ENCODE measurements at regions of chr1 and their contacts with region 1.

Region 1: DNA sequence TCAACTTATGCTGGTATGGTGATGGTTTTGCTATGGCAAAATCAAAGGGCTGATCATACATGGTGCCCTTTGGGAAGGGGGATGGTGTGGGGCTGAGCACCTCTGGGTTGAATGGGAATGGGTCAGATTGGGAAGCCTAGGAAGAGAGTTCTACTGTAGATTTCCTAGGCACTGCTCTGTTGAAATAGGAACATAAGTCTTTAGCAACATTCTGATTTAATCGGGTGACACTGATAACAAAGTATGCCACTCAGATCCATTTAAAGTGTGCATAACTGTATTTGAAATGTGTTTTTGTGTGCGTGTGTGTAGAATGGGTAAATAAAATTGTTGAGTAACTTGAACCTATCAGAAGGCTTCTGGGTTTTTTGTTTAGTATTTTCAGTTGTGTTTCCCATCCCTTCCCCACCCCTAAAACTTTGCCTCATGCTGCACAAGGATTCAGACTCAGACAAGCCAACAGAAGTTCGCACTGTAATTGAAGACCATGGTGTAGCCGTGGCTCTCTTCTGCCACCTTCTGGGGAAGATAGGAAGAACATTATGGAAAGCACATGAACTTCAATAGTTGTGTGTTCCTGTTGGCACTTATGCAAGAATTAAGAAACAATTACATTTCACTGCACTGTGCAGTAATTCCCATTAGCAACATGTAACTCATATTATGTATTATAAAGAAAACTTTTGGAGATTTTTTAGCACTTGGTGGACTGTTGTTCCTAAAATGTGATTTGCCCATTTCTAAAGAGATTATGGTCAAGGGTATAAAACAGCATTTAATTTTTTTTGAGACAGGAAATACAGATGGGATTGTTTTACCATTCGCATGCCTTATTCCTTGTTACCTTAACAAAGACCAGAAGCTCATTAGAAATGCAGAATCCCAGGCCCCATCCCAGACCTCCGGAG is 10.9 kb upstream of the C4BPB start:
- DNase-seq: peak; percentile 75
- H3K4me3 ChIP-seq: no peak overlapping the region
- H3K27ac ChIP-seq: no peak overlapping the region
- H3K4me1 ChIP-seq: peaks cover 44% of the 10 kb centered on the region
- H3K27me3 ChIP-seq: no peaks in the 10 kb centered on the region
- CTCF ChIP-seq: peak; percentile 91 to 94

Region 2: DNA sequence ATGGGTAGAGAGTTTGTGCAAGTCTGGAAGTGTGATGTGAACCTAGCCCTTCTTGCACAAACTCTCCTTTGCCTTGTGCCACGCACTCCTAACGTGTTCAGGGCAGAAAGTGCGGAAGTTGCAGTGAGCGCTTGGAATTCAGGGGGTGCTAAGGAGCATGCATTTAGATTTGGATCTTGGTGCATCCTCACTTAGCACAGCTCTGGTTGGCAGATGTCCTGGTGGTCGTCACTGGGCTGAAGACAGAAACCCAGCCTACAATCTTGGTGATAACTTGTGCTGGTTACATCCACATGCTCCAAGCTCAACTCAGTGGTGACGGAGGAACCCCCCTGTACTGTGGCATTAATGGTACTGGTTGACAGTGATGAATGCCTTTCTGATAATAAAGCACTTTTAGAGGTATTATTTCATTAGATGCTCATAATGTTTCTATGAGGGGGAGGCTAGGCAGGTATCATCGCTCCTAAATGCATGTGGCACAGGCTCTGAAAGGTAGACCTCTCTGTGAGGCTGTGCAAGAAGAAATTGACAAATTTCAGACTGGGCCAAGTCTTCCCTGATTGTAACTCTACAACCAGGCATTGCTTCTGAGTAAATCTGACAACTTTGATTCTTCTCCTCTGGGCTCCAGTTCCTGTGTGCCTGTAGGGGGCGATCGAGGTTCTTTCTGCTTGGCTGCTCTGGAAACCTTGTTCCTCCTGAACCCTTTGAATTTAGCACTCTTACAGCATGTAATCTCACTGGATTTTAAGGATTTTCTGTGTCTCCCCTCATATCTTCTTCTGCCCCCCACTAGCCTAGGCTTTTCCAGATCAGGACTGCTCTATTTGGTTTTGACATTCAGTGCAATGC is 352.4 kb before region 1 on chr1:
- CTCF ChIA-PET with region 1: no interaction called
- dilution Hi-C with region 1: no loop called
- in situ Hi-C with region 1: no loop called
- intact Hi-C with region 1: loop called (anchors 5 kb)
- DNase-seq: no peak
- H3K4me3 ChIP-seq: no peak overlapping the region
- H3K27ac ChIP-seq: no peak overlapping the region
- H3K4me1 ChIP-seq: peaks cover 19% of the 10 kb centered on the region
- H3K27me3 ChIP-seq: no peaks in the 10 kb centered on the region
- CTCF ChIP-seq: peak; percentile 62 to 68

Region 3: DNA sequence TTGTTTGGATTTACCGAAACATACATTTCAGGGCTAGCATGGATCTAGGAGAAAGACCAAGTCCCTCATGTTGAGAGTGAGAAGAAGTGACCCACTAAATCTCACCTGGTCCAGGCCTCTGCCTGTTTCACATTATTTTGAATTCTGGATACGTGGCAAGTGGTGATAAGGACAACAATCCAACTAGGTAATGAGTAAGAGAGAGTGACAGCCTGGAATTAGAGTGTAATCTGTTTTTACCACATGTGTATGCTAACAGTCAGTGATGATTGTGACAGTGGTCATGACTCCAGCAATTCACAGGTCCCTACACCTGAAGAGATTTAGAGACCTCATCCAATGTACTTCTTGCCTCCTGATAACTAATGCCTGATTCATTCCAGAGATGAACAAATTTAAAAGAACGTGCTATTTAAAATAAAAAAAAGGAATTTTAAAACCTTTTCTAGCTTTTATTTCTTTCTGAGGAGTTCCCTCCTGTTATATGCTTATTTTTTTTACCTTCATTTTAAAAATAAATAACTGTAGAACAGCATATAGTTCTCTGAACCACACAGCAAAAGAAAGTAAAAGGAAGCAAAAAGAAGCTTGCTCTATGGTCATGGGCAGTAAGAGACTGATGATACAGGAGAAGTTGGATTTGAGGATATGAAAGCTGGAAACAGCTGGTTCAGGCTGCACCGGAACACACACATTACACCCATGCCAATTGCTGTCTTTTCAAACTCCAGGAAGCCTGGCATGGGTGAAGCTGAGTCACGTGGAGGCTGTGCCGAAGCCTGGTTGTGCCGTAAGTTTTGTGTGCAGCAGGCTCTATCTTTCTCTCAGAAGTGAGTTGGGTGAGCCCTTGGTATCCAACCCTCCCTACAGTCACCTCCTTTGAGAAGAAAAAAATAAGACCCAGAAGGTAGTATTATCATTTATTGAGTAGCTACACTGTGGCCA is 59.8 kb before region 1 on chr1:
- CTCF ChIA-PET with region 1: no interaction called
- dilution Hi-C with region 1: no loop called
- in situ Hi-C with region 1: no loop called
- intact Hi-C with region 1: loop called (anchors 1 kb)
- DNase-seq: peak; percentile 78
- H3K4me3 ChIP-seq: no peak overlapping the region
- H3K27ac ChIP-seq: peak overlapping the region; percentile 100
- H3K4me1 ChIP-seq: peaks cover 59% of the 10 kb centered on the region
- H3K27me3 ChIP-seq: no peaks in the 10 kb centered on the region
- CTCF ChIP-seq: no peak

Region 4: DNA sequence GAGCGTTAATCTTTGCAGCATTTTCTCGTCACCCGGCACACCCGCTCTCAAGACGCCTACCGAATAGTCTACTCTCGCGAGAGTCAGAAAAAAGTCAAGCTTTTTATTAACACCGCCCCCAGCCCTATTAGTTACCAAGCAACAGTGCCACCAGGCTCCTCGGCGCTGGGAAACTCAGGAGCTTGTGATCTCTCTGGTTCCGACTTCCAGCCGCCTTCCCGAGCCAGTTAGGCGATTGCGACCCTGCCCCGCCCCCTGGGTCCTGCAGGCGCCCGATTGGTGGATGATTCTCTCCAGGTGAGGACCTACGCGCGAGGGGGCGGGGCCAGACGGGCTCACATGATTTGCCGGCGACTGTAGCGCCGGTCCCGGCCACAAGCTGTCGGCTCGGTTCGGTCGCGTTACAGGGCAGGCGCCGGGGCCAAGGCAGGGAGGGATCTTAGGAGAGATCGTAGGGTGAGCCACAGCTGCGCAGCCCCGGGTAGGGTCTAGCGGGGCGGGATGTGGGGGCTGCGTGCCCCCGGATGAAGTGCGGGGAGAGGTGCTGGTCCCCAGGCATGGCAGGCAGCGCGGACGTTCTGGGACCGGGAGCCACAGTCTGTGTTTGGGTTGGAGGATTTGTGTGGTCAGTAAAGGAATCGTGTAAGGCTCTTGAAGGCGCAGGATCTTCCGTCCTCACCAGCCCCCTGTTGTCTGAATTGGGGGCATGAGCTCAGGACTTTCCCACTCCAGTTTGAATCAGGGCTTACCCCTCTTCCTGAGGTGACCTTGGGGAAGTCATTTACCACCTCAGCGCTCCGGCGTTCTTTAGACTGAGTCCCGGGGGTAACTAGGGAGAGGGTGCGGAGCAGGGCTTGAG is 24.6 kb before region 1 on chr1 and contains the start of gene PFKFB2:
- CTCF ChIA-PET with region 1: interaction called, 3 read pairs
- dilution Hi-C with region 1: no loop called
- in situ Hi-C with region 1: no loop called
- intact Hi-C with region 1: loop called (anchors 1 kb)
- DNase-seq: peak; percentile 99
- H3K4me3 ChIP-seq: peak within 1 kb of the TSS; percentile 77 to 91 (median 80)
- H3K27ac ChIP-seq: peak within 1 kb of the TSS; percentile 95
- H3K4me1 ChIP-seq: peaks cover 34% of the 10 kb centered on the region
- H3K27me3 ChIP-seq: no peaks in the 10 kb centered on the region
- CTCF ChIP-seq: peak in 1 of 2 donors; percentile 29
- total RNA-seq, gene PFKFB2: 34.4 to 38.7 TPM

Measured in mammary epithelial cell (primary cell).